Caki2 (cell line): ENCODE measurements at regions of chr2 and their contacts with region 1.

Region 1: GRCh38 chr2:9799665-9800632 is 43.3 kb upstream of the TAF1B start:
- DNase-seq: peak; percentile 84

Region 2: DNA sequence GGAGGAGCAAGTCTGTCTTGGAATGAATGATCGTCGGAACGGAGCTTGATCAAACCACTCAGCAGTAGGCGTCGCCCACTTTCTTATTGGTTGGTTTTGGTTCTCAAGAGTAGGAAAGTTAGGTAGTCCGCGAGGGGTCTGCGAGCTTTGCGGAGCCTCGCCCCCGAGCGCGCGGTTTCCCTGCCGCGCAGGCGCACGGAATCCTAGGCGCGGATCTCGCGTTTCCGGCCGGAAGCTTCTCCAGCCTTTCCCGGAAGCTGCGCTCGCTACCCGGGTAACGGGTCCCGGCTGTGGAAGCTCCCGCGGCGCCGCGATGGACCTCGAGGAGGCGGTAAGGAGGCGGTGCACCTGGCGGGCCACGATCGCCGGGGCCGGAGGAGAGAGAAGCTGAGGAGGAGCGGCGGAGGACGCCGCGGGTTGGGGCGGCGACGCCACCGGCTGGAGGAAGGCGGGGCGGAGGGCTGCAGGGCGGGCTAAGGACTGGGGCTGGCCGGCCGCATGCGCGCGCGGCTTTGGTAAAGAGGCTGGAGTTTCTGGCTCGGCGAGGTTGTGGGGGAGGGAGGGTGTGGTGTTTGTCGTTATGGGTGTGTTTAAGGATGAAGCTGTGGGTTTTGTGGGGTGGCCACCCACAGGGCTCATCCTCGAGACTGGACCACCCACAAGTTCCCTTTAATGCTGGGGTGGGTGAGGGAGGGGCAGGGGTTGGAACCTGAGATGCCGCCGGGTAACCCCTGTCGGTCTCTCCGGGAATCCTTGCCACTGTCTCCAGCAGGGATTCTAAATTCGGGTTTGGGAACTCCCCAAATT is 43.5 kb after region 1 on chr2 and contains the start of gene TAF1B:
- in situ Hi-C with region 1: no loop called
- DNase-seq: peak; percentile 96
- total RNA-seq, gene TAF1B: 19.4 and 44.9 TPM in 2 replicates

Region 3: DNA sequence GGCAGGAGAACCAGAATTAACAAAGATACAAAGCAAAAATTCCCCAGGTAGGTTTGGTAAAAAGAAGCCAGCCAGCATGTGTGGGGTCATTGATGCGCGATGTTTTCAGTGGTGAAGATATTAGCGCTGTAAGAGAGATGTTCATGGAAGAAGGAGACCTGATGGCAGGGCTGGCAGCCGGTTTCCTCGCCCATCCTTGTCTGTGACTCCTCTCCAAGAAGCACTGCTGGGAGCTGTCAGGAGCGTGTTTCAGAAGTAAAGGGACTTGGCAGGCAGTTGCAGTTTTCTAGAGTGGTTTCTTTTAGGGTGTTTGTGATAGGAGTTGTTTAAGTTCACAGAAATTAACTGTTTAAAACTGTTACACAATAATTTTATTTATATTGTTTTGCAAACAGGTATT is 67.9 kb after region 1 on chr2:
- in situ Hi-C with region 1: no loop called
- DNase-seq: no peak

Region 4: DNA sequence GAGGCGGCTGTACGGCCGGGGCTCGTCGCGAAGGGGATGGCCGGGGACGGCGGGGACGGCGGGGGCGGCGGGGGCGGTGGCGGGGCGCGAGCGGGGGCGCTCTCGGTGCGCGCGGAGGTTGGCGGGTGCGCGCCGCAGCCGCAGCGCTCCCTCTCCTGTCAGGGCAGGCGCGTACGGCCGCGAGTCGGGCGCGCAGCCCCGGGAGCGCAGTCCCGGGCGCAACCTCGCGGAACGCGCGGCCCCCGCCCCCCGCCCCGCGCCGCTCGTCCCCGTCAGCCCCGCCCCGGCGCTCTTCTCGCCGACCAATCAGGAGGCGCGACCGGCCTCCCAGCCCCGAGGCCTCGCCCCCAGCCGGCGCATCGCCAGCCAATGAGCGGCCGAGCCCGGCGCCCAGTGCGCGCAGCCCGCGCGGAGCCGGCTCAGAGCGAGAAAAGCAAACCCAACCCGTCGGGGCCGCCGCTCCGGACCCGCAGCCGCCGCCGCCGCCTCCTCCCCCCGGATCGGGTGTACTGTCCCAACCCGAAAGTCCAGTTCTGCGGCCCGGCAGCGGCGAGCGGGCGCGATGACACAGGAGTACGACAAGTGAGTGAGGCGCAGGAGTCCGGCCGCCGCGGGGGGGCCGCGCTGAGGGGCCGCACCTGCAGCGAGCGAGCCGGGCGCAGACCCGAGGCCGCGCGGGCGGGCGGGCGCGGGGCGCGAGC is 151.5 kb after region 1 on chr2 and contains the start of gene GRHL1:
- in situ Hi-C with region 1: loop called (anchors 25 kb)
- DNase-seq: peak; percentile 88
- total RNA-seq, gene GRHL1: 0.43 and 9.1 TPM in 2 replicates

Region 5: GRCh38 chr2:10043906-10044601 is 244.1 kb after region 1 on chr2:
- in situ Hi-C with region 1: loop called (anchors 25 kb)
- DNase-seq: peak; percentile 90